Endothelial cell of umbilical vein (primary cell): ENCODE measurements at regions of chr18 and their contacts with region 1.

Region 1: GRCh38 chr18:45775241-45775676 is 50.2 kb upstream of the SIGLEC15 start:
- DNase-seq: peak; percentile 89
- H3K4me3 ChIP-seq: peak overlapping the region; percentile 27 to 62 (median 55)
- H3K27ac ChIP-seq: peak overlapping the region; percentile 46
- H3K4me1 ChIP-seq: peaks cover 9% of the 10 kb centered on the region
- H3K27me3 ChIP-seq: peaks cover 3 to 16% of the 10 kb centered on the region in 2 experiments
- CTCF ChIP-seq: no peak
- POLR2A ChIP-seq: peak; percentile 80

Region 2: DNA sequence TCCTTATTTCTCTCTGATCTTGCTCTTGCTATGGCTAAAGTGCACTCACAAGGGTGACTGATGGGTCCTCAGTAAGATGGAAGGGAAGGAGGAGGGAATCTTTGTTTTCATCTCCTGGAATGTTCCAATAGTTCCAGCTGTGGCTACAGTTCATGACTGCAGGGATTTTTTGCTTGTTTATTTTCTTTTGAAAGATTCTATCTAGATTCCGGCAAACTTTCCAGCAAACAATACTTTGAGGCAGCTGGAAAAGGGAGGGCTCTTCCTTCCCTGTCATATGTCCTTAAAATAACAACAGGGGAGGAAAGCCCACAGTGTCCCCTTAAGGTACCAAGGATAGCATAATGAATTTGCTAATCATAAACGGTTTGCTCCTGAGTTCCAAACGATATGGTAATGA is 271.3 kb before region 1 on chr18:
- CTCF ChIA-PET with region 1: no interaction called
- POLR2A ChIA-PET with region 1: no interaction called
- dilution Hi-C with region 1: no loop called
- intact Hi-C with region 1: no loop called
- DNase-seq: no peak
- H3K4me3 ChIP-seq: no peak overlapping the region
- H3K27ac ChIP-seq: no peak overlapping the region
- H3K4me1 ChIP-seq: no peaks in the 10 kb centered on the region
- H3K27me3 ChIP-seq: no peaks in the 10 kb centered on the region
- CTCF ChIP-seq: no peak
- POLR2A ChIP-seq: no peak

Region 3: DNA sequence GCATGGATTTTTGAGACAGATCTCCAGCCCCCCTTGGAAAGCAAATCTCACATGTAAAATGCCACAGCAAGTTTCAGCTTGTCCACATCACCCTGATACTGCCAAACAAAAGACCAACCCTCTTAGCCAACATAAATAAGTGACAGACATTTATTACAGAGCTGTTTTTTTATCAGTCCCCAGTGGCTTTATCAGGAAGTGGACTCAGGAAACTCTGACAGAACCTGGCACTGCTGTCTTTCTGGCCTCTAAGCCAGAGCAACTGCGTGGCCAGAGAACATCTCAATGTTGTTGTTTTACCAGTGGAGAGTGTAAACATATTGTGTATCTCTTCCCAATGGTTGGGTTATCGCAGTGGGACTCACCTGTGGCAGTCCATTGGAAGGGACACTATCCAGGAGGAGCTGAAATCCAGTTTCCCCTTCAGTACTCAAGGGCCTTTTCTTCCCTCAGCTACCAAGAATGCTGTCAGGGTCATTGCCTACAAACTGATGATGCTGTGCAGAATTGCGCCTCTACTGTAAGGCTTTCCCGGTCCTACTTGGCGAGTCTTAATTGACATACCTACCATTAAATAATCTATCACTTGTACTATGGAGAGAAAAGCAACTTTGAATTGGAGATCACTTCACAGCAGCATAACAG is 29.3 kb before region 1 on chr18:
- CTCF ChIA-PET with region 1: interaction called, 12 read pairs
- POLR2A ChIA-PET with region 1: no interaction called
- dilution Hi-C with region 1: no loop called
- intact Hi-C with region 1: no loop called
- DNase-seq: peak; percentile 60
- H3K4me3 ChIP-seq: no peak overlapping the region
- H3K27ac ChIP-seq: no peak overlapping the region
- H3K4me1 ChIP-seq: peaks cover 12% of the 10 kb centered on the region
- H3K27me3 ChIP-seq: peaks cover 5 to 7% of the 10 kb centered on the region in 2 experiments
- CTCF ChIP-seq: no peak
- POLR2A ChIP-seq: no peak

Region 4: GRCh38 chr18:45755934-45756333 is 19.3 kb before region 1 on chr18:
- CTCF ChIA-PET with region 1: interaction called, 5 read pairs
- POLR2A ChIA-PET with region 1: no interaction called
- dilution Hi-C with region 1: no loop called
- intact Hi-C with region 1: loop called (anchors 1 kb)
- DNase-seq: peak; percentile 99
- H3K4me3 ChIP-seq: no peak overlapping the region
- H3K27ac ChIP-seq: no peak overlapping the region
- H3K4me1 ChIP-seq: peaks cover 26% of the 10 kb centered on the region
- H3K27me3 ChIP-seq: peaks cover 15 to 32% of the 10 kb centered on the region in 2 experiments
- CTCF ChIP-seq: no peak
- POLR2A ChIP-seq: no peak

Region 5: GRCh38 chr18:45764000-45764686 is 11.1 kb before region 1 on chr18:
- CTCF ChIA-PET with region 1: interaction called, 13 read pairs
- POLR2A ChIA-PET with region 1: interaction called, 4 read pairs
- dilution Hi-C with region 1: no loop called
- intact Hi-C with region 1: loop called (anchors 1 kb)
- DNase-seq: peak; percentile 80
- H3K4me3 ChIP-seq: no peak overlapping the region
- H3K27ac ChIP-seq: peak overlapping the region; percentile 80
- H3K4me1 ChIP-seq: peaks cover 27% of the 10 kb centered on the region
- H3K27me3 ChIP-seq: peaks cover 0 to 5% of the 10 kb centered on the region in 2 experiments
- CTCF ChIP-seq: no peak
- POLR2A ChIP-seq: peak; percentile 21

Region 6: DNA sequence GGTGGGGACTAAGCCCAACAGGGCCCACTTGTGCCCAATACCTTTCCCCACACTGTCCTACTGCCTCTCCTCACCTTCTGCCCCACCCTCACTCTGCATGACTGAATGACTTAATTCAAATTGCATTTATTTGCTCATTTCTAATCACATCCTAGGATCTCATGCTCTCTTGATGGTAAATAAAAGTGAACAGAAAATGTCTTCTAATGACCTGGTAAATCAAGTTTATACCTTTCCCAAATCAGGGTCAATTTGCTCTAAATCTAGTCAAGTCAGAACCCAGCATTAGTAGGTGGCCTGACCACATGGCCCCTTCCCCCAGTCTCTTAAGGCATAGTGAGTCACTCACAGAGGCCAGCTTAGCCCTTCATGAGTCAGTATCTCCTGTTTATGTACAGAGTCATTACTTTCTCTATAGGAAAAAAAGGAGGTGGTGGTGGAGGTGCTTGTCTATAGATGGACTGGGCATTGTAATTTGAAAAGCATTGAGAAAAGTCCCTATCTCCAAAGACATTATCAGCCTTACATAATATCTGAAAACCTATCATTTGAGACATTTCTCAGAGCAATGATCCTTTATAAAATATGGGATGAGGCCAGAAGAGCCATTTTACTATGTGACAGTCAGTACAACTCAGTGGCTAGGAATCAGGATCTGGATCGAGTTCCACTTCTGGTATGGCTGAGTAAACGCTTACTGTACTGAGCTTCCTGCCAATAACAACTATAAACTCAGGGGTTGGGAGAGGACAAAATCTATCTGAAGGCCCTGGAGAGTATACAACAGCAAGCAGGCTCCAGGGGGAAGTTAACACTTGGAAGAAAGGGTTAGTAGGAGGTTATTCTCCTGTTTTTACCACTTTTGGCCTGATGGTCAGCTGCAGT is 27.6 kb after region 1 on chr18:
- CTCF ChIA-PET with region 1: interaction called, 12 read pairs
- POLR2A ChIA-PET with region 1: interaction called, 8 read pairs
- dilution Hi-C with region 1: no loop called
- intact Hi-C with region 1: loop called (anchors 1 kb)
- DNase-seq: peak; percentile 94
- H3K4me3 ChIP-seq: no peak overlapping the region
- H3K27ac ChIP-seq: peak overlapping the region; percentile 88
- H3K4me1 ChIP-seq: peaks cover 26% of the 10 kb centered on the region
- H3K27me3 ChIP-seq: no peaks in the 10 kb centered on the region
- CTCF ChIP-seq: no peak
- POLR2A ChIP-seq: no peak